Activated B cell treated with CpG ODN at 0.5 μM for 24 hours (primary cell): ENCODE measurements at regions of chr6 and their contacts with region 1.

Region 1: DNA sequence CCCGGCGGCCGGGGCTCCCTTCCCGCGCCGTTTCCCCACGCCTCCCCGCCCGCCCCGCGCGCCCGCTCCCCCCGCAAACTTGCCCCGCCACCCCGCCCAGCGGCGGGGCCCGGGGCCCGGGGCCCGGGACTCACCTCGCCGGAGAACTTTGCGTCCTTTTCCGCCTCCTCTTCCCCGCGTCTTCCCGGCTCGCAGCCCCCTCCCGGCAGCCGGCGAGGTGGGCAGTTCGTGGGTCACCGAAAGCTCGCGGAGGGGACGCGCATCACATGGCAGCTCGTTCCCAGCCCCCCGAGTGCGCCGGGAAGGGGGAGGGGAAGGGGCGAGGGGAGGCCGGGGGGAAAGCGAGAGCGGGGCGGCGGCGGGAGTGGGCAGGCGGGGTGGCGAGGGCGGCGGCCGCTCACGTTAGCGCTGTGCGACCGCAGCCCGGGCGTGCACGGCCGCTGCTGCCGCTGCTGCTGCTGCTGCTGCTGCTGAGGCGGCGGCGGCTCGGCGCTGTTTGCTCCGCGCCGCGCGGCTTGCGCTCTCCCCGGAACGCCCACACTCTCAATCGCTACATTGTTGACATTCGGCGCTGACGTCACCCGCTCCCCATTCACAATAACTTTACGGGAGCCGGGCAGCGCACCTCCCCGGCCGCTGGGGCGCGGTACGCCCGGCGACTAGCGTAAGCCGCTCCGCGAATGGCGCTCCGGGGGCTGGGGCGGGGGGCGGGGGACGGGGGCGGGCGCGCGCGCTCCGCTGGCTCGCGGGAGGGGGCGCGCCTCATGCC is at the start of gene BACH2:
- DNase-seq: peak; percentile 85
- ATAC-seq: peak; percentile 76
- H3K4me3 Mint-ChIP-seq: peak within 1 kb of the TSS; percentile 89
- H3K27ac Mint-ChIP-seq: peak within 1 kb of the TSS; percentile 89
- H3K4me1 Mint-ChIP-seq: peaks cover 55% of the 10 kb centered on the region
- H3K27me3 Mint-ChIP-seq: no peaks in the 10 kb centered on the region
- CTCF ChIP-seq: no peak
- total RNA-seq, gene BACH2: 79.6 and 90.4 TPM in 2 replicates

Region 2: GRCh38 chr6:89940225-89941027 is 356.1 kb before region 1 on chr6:
- CTCF ChIA-PET with region 1: interaction called, 6 read pairs
- POLR2A ChIA-PET with region 1: no interaction called
- intact Hi-C with region 1: loop called (anchors 1 kb)
- DNase-seq: no peak
- ATAC-seq: peak; percentile 89
- H3K4me3 Mint-ChIP-seq: no peak overlapping the region
- H3K27ac Mint-ChIP-seq: peak overlapping the region; percentile 59
- H3K4me1 Mint-ChIP-seq: peaks cover 13% of the 10 kb centered on the region
- H3K27me3 Mint-ChIP-seq: no peaks in the 10 kb centered on the region
- CTCF ChIP-seq: peak; percentile 58

Region 3: GRCh38 chr6:90179190-90180169 is 117.0 kb before region 1 on chr6:
- CTCF ChIA-PET with region 1: no interaction called
- POLR2A ChIA-PET with region 1: interaction called, 8 read pairs
- intact Hi-C with region 1: loop called (anchors 10 kb)
- DNase-seq: no peak
- ATAC-seq: no peak
- H3K4me3 Mint-ChIP-seq: peak overlapping the region; percentile 77
- H3K27ac Mint-ChIP-seq: peak overlapping the region; percentile 92
- H3K4me1 Mint-ChIP-seq: peaks cover 79% of the 10 kb centered on the region
- H3K27me3 Mint-ChIP-seq: no peaks in the 10 kb centered on the region
- CTCF ChIP-seq: no peak

Region 4: GRCh38 chr6:90315354-90315950 is 18.9 kb after region 1 on chr6:
- CTCF ChIA-PET with region 1: interaction called, 3 read pairs
- POLR2A ChIA-PET with region 1: interaction called, 48 read pairs
- intact Hi-C with region 1: loop called (anchors 1 kb)
- DNase-seq: no peak
- ATAC-seq: peak; percentile 84
- H3K4me3 Mint-ChIP-seq: peak overlapping the region; percentile 55
- H3K27ac Mint-ChIP-seq: peak overlapping the region; percentile 91
- H3K4me1 Mint-ChIP-seq: peaks cover 72% of the 10 kb centered on the region
- H3K27me3 Mint-ChIP-seq: no peaks in the 10 kb centered on the region
- CTCF ChIP-seq: no peak

Region 5: GRCh38 chr6:90375681-90376439 is 79.3 kb after region 1 on chr6:
- CTCF ChIA-PET with region 1: no interaction called
- POLR2A ChIA-PET with region 1: interaction called, 39 read pairs
- intact Hi-C with region 1: loop called (anchors 1 kb)
- DNase-seq: peak; percentile 43
- ATAC-seq: peak; percentile 95
- H3K4me3 Mint-ChIP-seq: peak overlapping the region; percentile 50
- H3K27ac Mint-ChIP-seq: peak overlapping the region; percentile 94
- H3K4me1 Mint-ChIP-seq: peaks cover 72% of the 10 kb centered on the region
- H3K27me3 Mint-ChIP-seq: no peaks in the 10 kb centered on the region
- CTCF ChIP-seq: no peak

Region 6: GRCh38 chr6:90393232-90393884 is 96.8 kb after region 1 on chr6:
- CTCF ChIA-PET with region 1: interaction called, 66 read pairs
- POLR2A ChIA-PET with region 1: interaction called, 24 read pairs
- intact Hi-C with region 1: loop called (anchors 1 kb)
- DNase-seq: peak; percentile 47
- ATAC-seq: peak; percentile 53
- H3K4me3 Mint-ChIP-seq: peak overlapping the region; percentile 28
- H3K27ac Mint-ChIP-seq: peak overlapping the region; percentile 59
- H3K4me1 Mint-ChIP-seq: peaks cover 45% of the 10 kb centered on the region
- H3K27me3 Mint-ChIP-seq: no peaks in the 10 kb centered on the region
- CTCF ChIP-seq: peak; percentile 67

Region 7: GRCh38 chr6:90586836-90587638 is 290.5 kb after region 1 on chr6 and contains the start of gene MAP3K7:
- CTCF ChIA-PET with region 1: no interaction called
- POLR2A ChIA-PET with region 1: interaction called, 3 read pairs
- intact Hi-C with region 1: loop called (anchors 5 kb)
- DNase-seq: peak; percentile 91
- ATAC-seq: peak; percentile 86
- H3K4me3 Mint-ChIP-seq: peak within 1 kb of the TSS; percentile 94
- H3K27ac Mint-ChIP-seq: peak within 1 kb of the TSS; percentile 99
- H3K4me1 Mint-ChIP-seq: peaks cover 41% of the 10 kb centered on the region
- H3K27me3 Mint-ChIP-seq: peaks cover 7% of the 10 kb centered on the region
- CTCF ChIP-seq: no peak
- total RNA-seq, gene MAP3K7: 23.8 and 27.2 TPM in 2 replicates